HCT116 (cell line): ENCODE measurements at regions of chr7 and their contacts with region 1.

Region 1: GRCh38 chr7:79298145-79298760 is 155.2 kb downstream of the MAGI2 start:
- DNase-seq: peak; percentile 28
- ATAC-seq: 0 out of 2 replicates have a peak, but pooled peaks have one; percentile 54
- H3K4me3 ChIP-seq: no peak overlapping the region
- H3K27ac ChIP-seq: no peak overlapping the region
- H3K4me1 ChIP-seq: no peaks in the 10 kb centered on the region
- H3K27me3 ChIP-seq: no peaks in the 10 kb centered on the region
- CTCF ChIP-seq: peak; percentile 56 to 70 (median 68); a peak in 5 of 6 replicates
- POLR2A ChIP-seq: no peak
- RAD21 ChIP-seq: peak; percentile 66

Region 2: GRCh38 chr7:79282063-79282694 is 16.1 kb before region 1 on chr7:
- CTCF ChIA-PET with region 1: interaction called, 16 read pairs
- POLR2A ChIA-PET with region 1: interaction called, 3 read pairs
- RAD21 ChIA-PET with region 1: no interaction called
- intact Hi-C with region 1: no loop called
- DNase-seq: peak; percentile 35
- ATAC-seq: peak; percentile 76
- H3K4me3 ChIP-seq: no peak overlapping the region
- H3K27ac ChIP-seq: no peak overlapping the region
- H3K4me1 ChIP-seq: peaks cover 8 to 13% of the 10 kb centered on the region in 2 experiments; a peak in 2 of 4 replicates
- H3K27me3 ChIP-seq: no peaks in the 10 kb centered on the region
- CTCF ChIP-seq: peak; percentile 36 to 47 (median 40); a peak in 4 of 6 replicates
- POLR2A ChIP-seq: no peak
- RAD21 ChIP-seq: peak; percentile 43

Region 3: DNA sequence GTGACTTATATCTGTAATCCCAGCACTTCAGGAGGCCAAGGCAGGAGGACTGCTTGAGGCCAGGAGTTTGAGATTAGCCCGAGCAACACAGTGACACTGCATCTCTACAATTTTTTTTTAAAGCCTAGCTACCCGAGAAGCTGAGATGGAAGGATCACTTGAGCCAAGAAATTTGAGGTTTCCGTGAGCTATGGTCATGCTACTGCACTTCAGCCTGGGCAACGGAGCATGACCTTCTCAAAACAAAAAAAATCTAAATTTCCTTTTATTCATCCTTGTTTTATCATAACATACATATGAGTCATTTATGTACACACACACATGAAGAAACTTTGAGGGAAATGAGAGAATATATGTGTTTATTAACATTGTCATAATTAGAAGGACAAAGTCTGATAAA is 432.7 kb after region 1 on chr7:
- CTCF ChIA-PET with region 1: no interaction called
- POLR2A ChIA-PET with region 1: no interaction called
- RAD21 ChIA-PET with region 1: no interaction called
- intact Hi-C with region 1: no loop called
- DNase-seq: no peak
- ATAC-seq: no peak
- H3K4me3 ChIP-seq: no peak overlapping the region
- H3K27ac ChIP-seq: no peak overlapping the region
- H3K4me1 ChIP-seq: no peaks in the 10 kb centered on the region
- H3K27me3 ChIP-seq: no peaks in the 10 kb centered on the region
- CTCF ChIP-seq: no peak
- POLR2A ChIP-seq: no peak
- RAD21 ChIP-seq: no peak

Region 4: DNA sequence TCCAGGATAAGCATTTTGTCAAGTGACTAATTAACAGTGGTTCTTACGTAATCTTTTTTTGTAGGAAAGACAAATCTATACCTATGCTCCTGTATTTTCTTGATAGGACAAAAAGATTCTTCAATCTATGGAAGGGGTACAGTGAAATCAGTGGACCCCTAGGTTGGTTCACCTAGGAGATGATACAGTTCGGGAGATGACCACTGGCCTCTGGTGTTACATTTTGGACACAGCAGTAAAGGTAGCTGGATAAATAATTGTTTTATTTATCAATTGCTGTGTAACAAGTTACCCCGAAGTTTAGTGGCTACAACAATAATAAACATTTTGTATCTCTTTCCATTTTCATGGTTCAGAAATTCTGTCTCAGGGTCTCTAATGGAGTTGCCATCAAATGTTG is 443.4 kb after region 1 on chr7:
- CTCF ChIA-PET with region 1: interaction called, 45 read pairs
- POLR2A ChIA-PET with region 1: no interaction called
- RAD21 ChIA-PET with region 1: interaction called, 5 to 7 read pairs
- intact Hi-C with region 1: loop called (anchors 1 kb)
- DNase-seq: no peak
- ATAC-seq: peak; percentile 74
- H3K4me3 ChIP-seq: no peak overlapping the region
- H3K27ac ChIP-seq: no peak overlapping the region
- H3K4me1 ChIP-seq: no peaks in the 10 kb centered on the region
- H3K27me3 ChIP-seq: no peaks in the 10 kb centered on the region
- CTCF ChIP-seq: peak; percentile 33 to 60 (median 41); a peak in 5 of 6 replicates
- POLR2A ChIP-seq: no peak
- RAD21 ChIP-seq: peak; percentile 70

Region 5: GRCh38 chr7:79778786-79779770 is 480.8 kb after region 1 on chr7:
- CTCF ChIA-PET with region 1: no interaction called
- POLR2A ChIA-PET with region 1: no interaction called
- RAD21 ChIA-PET with region 1: no interaction called
- intact Hi-C with region 1: no loop called
- DNase-seq: no peak
- ATAC-seq: no peak
- H3K4me3 ChIP-seq: no peak overlapping the region
- H3K27ac ChIP-seq: no peak overlapping the region
- H3K4me1 ChIP-seq: 0 out of 4 replicates have a peak, but pooled peaks cover 0 to 3% of the 10 kb centered on the region in 2 experiments
- H3K27me3 ChIP-seq: no peaks in the 10 kb centered on the region
- CTCF ChIP-seq: no peak
- POLR2A ChIP-seq: no peak
- RAD21 ChIP-seq: no peak

Region 6: GRCh38 chr7:80047856-80048459 is 749.7 kb after region 1 on chr7:
- CTCF ChIA-PET with region 1: interaction called, 16 read pairs
- POLR2A ChIA-PET with region 1: no interaction called
- RAD21 ChIA-PET with region 1: interaction called in 1 of 2 experiments, 3 read pairs
- intact Hi-C with region 1: loop called (anchors 5 kb)
- DNase-seq: no peak
- ATAC-seq: peak; percentile 58; the same call in 1 of the 2 replicates
- H3K4me3 ChIP-seq: no peak overlapping the region
- H3K27ac ChIP-seq: no peak overlapping the region
- H3K4me1 ChIP-seq: no peaks in the 10 kb centered on the region
- H3K27me3 ChIP-seq: no peaks in the 10 kb centered on the region
- CTCF ChIP-seq: peak; percentile 15 to 58 (median 48); a peak in 3 of 6 replicates
- POLR2A ChIP-seq: no peak
- RAD21 ChIP-seq: peak; percentile 68

Region 7: GRCh38 chr7:80453699-80454340 is 1155.6 kb after region 1 on chr7:
- CTCF ChIA-PET with region 1: no interaction called
- POLR2A ChIA-PET with region 1: no interaction called
- RAD21 ChIA-PET with region 1: no interaction called
- intact Hi-C with region 1: loop called (anchors 10 kb)
- DNase-seq: peak; percentile 19
- ATAC-seq: peak; percentile 42; the same call in 1 of the 2 replicates
- H3K4me3 ChIP-seq: no peak overlapping the region
- H3K27ac ChIP-seq: no peak overlapping the region
- H3K4me1 ChIP-seq: peaks cover 3 to 14% of the 10 kb centered on the region in 2 experiments; a peak in 2 of 4 replicates
- H3K27me3 ChIP-seq: no peaks in the 10 kb centered on the region
- CTCF ChIP-seq: peak; percentile 30 to 69 (median 56); a peak in 4 of 6 replicates
- POLR2A ChIP-seq: no peak
- RAD21 ChIP-seq: peak; percentile 85